Aorta (tissue), 5 donors: ENCODE measurements at regions of chr10 and their contacts with region 1.

Region 1: DNA sequence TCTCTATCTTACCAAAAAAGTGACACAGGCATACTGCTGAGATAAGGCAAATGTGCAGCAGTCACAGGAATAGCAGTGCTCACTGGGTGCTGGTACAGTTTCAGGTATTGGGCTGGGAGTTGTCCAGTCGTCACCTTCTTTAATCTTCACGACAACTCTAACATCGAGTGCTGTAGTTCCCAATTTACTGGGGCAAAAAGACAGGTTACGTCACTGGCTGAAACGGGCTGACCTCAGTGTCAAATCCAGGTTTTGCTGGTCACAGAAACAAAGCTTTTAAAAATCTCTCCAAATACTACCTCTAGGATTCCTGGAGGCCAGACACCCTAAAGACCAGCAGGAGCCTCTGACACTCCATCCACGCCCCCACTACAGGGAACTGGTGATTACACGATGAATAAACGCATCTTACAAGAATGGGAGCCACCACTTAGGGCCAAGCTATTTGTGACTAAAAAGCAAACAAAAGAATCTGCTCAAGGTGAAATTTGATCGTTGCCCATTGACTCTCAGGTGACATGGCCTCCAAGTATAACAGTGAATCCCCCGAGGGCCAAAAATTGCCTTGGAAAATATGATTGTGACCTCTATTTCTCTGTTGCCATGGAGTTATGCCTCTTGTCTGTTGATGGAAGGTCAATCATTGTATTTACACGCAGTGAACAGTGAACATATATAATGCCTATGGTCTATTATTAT is 282.5 kb downstream of the KLF6 start:
- DNase-seq: no peak
- ATAC-seq: no peak
- H3K4me3 ChIP-seq: no peak overlapping the region
- H3K27ac ChIP-seq: no peak overlapping the region
- H3K4me1 ChIP-seq: no peaks in the 10 kb centered on the region
- H3K27me3 ChIP-seq: no peaks in the 10 kb centered on the region

Region 2: DNA sequence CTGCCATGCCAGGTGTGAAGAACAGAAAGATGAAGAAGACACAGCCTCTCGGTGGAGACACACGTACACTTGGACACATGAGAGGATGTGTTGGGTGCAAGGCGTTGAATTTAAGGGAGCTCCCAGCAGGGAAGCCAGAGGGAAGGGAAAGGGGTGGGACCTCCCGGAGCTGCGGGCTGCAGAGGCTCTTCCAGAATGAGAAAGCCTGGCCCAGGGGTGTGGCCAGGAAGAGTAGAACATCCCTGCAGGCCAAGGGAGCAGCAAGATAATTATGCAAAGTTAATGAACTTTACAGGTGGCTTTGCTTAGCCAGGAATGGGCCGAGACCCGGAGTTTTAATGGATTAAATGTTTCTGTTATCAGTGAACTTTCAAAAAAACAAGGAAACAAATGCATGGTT is 12.2 kb after region 1 on chr10:
- intact Hi-C with region 1: no loop called
- DNase-seq: no peak
- ATAC-seq: no peak
- H3K4me3 ChIP-seq: no peak overlapping the region
- H3K27ac ChIP-seq: no peak overlapping the region
- H3K4me1 ChIP-seq: no peaks in the 10 kb centered on the region
- H3K27me3 ChIP-seq: no peaks in the 10 kb centered on the region

Region 3: DNA sequence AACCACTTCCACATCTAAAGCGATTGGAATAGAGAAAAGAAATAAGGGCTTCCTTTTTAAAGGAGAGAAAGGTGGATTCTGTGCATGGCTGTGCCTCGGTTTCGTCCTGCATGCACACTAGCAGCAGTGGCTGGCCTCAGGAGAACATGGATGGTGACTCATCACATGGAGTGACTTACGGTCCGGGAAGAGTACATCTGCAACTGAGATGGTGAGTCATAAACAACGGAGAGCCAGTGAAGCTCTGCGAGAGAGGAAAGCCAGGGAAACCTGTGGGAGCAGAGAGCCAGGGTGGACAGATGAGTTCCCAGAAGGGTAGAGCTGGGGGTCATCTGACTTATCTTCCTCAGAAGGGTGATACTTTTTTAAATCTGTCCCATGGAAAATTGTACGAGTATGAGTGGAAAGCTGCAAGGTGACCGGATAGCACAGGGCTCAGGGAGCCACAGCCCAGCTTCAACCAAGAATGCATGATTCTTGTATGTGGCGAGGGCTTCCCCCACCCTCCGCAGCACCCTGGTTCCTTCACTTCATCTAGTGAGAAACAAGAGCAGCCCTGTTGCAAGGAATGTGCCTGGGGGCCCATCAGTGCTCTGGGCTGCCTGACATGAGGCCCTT is 23.5 kb after region 1 on chr10:
- intact Hi-C with region 1: loop called in 1 of 2 experiments (anchors 2 kb)
- DNase-seq: peak in 1 of 2 donors; percentile 75
- ATAC-seq: no peak
- H3K4me3 ChIP-seq: no peak overlapping the region
- H3K27ac ChIP-seq: peak overlapping the region in 1 of 2 donors; percentile 72
- H3K4me1 ChIP-seq: peaks cover 0 to 5% of the 10 kb centered on the region in 2 donors
- H3K27me3 ChIP-seq: no peaks in the 10 kb centered on the region